Tibial artery (tissue), 4 donors: ENCODE measurements at regions of chr9 and their contacts with region 1.

Region 1: GRCh38 chr9:124133727-124134126 is 122.2 kb downstream of the LHX2 start:
- DNase-seq: peak; percentile 47 to 73
- H3K4me3 ChIP-seq: no peak overlapping the region
- H3K27ac ChIP-seq: no peak overlapping the region
- H3K4me1 ChIP-seq: peaks cover 0 to 13% (median 8%) of the 10 kb centered on the region in 4 donors
- H3K27me3 ChIP-seq: peaks cover 0 to 21% of the 10 kb centered on the region in 2 donors
- CTCF ChIP-seq: no peak

Region 2: GRCh38 chr9:124030969-124031451 is 102.7 kb before region 1 on chr9:
- intact Hi-C with region 1: no loop called
- DNase-seq: no peak
- H3K4me3 ChIP-seq: peak overlapping the region; percentile 36 to 40
- H3K27ac ChIP-seq: no peak overlapping the region
- H3K4me1 ChIP-seq: no peaks in the 10 kb centered on the region
- H3K27me3 ChIP-seq: peaks cover 0 to 39% of the 10 kb centered on the region in 2 donors
- CTCF ChIP-seq: no peak

Region 3: DNA sequence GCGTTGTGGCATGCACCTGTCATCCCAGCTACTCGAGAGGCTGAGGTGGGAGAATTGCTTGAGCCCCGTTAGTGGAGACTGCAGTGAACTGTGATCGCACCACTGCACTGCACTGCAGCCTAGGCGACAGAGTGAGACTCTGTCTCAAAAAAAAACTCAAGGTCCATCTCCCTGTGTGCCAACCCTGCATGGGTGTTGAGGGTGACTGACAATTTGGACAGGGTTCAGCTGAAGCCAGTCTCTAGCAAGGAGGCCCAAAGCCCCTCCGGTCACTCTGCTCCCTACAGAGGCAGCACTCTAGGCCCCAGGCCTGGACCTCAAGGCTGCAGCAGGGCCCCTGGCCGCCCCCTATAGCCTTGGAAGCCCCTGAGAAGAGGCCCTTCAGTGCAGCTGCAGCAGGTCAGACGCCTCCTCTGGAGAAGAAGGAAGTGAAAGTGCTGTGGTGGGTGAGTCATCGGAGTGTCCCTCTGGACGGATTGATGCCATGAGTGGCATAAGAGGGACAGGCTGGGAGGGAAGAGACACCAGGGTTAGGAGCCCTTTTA is 84.8 kb after region 1 on chr9:
- intact Hi-C with region 1: loop called (anchors 10 kb)
- DNase-seq: peak; percentile 64 to 76
- H3K4me3 ChIP-seq: no peak overlapping the region
- H3K27ac ChIP-seq: no peak overlapping the region
- H3K4me1 ChIP-seq: peaks cover 0 to 14% (median 6%) of the 10 kb centered on the region in 4 donors
- H3K27me3 ChIP-seq: no peaks in the 10 kb centered on the region
- CTCF ChIP-seq: no peak

Region 4: DNA sequence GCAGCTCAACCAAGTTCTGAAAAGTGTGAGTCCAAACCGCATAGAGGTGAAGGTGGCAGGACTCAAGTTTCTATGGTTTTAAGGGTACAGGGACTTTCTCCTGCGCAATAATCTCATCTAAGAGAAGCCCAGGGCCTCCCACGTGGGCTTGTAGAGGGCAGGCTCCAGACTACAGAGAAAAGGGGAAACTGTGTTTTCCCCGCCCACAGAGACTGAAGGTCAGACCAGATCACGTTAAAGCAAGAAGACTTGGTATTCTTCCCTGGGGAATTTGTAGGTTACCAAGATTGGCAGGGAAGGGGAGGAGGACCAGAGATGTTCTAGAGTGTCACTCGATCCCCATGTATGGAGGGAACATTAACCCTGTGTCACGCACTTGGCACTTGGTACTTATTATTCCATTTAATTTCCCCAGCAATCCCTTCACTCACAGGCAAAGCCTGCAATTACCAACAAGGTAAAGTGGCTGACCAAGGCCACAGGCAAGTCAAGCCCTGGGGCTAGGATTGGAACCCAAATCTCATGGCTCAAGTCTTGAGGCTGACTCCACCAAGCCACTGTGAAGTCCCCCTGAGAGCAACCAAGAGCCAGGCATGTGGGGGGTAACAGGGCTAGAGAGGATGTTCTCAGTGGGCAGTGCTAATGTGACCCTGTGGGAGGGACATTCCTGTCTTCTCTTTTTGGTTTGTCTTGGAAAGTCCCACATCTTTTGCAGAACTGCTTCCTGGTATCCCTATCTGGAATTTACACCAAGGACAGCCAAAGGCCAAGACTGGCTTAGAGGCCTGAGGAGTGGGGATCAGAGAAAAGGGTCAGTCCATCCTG is 105.7 kb after region 1 on chr9:
- intact Hi-C with region 1: loop called (anchors 10 kb)
- DNase-seq: peak; percentile 62 to 63
- H3K4me3 ChIP-seq: no peak overlapping the region
- H3K27ac ChIP-seq: no peak overlapping the region
- H3K4me1 ChIP-seq: peaks cover 0 to 15% (median 14%) of the 10 kb centered on the region in 4 donors
- H3K27me3 ChIP-seq: no peaks in the 10 kb centered on the region
- CTCF ChIP-seq: no peak